ENCODE measurements at regions of chr4 and their contacts with region 1.

Region 1: DNA sequence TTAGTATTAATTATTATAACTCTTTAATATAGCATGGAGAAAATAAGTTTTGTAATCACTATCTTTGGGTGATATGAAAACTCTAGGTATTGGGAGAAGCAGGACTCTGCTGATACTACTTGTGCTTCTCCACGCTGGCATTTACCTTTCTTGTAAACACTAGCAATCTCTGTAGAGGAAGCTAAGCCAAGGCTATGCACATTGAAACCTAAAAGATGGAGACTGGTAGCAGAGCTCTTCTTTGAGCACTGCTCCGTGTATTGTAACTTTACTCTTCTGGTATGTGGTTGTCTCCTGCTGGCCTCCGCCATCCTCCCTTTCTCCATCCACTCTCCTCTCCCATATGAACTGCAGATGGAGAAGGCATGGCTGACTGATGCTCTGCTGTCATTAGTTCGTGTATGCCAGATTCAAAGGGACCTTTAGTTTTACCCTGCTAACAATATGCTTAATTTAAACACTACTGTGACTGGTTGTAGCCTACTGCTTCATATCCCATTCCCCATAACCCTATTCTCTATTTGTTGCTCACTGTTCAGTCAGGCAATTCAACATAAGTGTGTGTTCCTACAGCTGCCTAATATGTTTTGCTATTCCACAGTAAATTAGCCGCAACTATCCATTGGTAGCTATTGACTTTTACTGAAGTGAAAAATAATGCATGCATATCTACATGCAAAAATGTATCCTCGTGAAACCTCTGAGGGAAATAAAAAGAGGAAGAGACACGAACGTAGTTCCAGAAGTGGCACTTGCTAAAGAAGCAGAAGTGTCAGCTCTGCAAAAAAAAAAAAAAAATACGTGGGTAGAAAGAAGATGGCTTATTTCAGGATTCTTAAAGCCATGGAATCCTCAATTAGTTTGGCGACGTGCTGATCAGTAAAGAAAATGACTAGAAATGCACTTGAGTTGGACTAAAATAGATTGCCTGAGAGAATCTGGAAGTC is 55.6 kb upstream of the CCSER1 start:
- DNase-seq: no peak
- ATAC-seq: peak; percentile 88
- H3K4me3 Mint-ChIP-seq: peak overlapping the region; percentile 52
- H3K27ac Mint-ChIP-seq: peak overlapping the region; percentile 51
- H3K4me1 Mint-ChIP-seq: peaks cover 36% of the 10 kb centered on the region
- H3K27me3 Mint-ChIP-seq: peaks cover 5% of the 10 kb centered on the region
- CTCF ChIP-seq: no peak

Region 2: DNA sequence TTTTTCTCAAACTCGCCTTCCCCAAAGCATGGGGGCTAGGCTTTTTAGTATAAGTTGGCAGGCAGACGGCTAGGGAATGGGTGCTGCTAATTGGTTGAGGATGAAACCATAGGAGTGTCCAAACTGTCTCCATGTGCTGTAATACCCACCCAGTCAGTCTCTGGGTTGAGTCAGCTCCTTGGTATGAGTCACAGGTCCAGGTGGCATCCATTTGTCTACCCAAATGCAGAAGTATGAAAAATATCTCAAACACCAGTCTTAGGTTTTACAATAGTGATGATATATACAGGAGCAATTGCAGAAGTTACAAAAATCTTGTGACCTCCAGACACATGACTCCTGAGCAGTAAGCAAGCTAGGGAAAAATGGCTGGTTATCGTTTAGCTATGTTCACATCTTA is 28.2 kb after region 1 on chr4:
- CTCF ChIA-PET with region 1: no interaction called
- POLR2A ChIA-PET with region 1: no interaction called
- intact Hi-C with region 1: loop called (anchors 2 kb)
- DNase-seq: no peak
- ATAC-seq: peak; percentile 97
- H3K4me3 Mint-ChIP-seq: no peak overlapping the region
- H3K27ac Mint-ChIP-seq: peak overlapping the region; percentile 79
- H3K4me1 Mint-ChIP-seq: peaks cover 18% of the 10 kb centered on the region
- H3K27me3 Mint-ChIP-seq: peaks cover under 1% of the 10 kb centered on the region
- CTCF ChIP-seq: no peak

Region 3: GRCh38 chr4:90127223-90127705 is 55.7 kb after region 1 on chr4 and contains the start of gene CCSER1:
- CTCF ChIA-PET with region 1: no interaction called
- POLR2A ChIA-PET with region 1: interaction called, 9 read pairs
- intact Hi-C with region 1: loop called (anchors 1 kb)
- DNase-seq: peak; percentile 78
- ATAC-seq: peak; percentile 89
- H3K4me3 Mint-ChIP-seq: peak within 1 kb of the TSS; percentile 96
- H3K27ac Mint-ChIP-seq: peak within 1 kb of the TSS; percentile 95
- H3K4me1 Mint-ChIP-seq: peaks cover 21% of the 10 kb centered on the region
- H3K27me3 Mint-ChIP-seq: peaks cover 2% of the 10 kb centered on the region
- CTCF ChIP-seq: no peak
- total RNA-seq, gene CCSER1: 14.4 and 20.1 TPM in 2 replicates